AG04449 (cell line): ENCODE measurements at regions of chr11 and their contacts with region 1.

Region 1: GRCh38 chr11:109426442-109427240 is 4.7 kb downstream of the C11orf87 start:
- DNase-seq: peak; percentile 16
- H3K4me3 ChIP-seq: no peak overlapping the region
- CTCF ChIP-seq: peak; percentile 18

Region 2: GRCh38 chr11:109439684-109440083 is 13.0 kb after region 1 on chr11:
- CTCF ChIA-PET with region 1: interaction called, 11 read pairs
- POLR2A ChIA-PET with region 1: interaction called, 3 read pairs
- DNase-seq: no peak
- H3K4me3 ChIP-seq: no peak overlapping the region
- CTCF ChIP-seq: no peak

Region 3: DNA sequence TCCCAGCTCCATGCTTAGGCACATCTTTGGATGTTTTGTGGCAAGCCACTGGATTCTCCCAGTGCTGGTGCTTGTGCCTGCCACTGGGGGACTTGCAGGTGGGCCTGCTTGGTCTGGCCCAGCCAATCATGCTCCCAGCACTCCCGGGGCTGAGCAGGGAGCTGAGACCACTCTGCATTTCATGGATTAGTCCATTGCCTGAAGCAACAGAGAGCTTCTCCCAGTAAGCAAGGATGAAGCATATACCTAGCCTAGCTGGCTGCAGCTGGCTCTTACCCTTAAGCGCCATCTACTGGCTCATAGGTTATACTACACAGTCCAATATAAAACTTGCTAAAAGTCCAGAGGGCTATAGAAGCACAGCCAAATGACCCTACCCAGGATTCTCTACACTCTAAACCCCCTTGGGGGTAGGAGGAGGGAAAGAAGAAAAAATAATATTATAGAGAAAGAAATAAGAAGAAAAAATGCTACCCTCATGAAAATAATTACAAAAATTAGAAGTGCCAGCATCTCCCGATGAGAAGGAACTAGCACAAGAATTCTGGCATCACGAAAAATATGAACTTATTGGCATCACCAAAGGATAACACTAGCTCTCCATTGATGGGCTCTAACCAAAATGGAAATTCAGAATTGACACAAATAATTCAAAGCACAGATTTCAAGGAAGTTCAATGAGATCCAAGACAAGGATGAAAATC is 270.7 kb after region 1 on chr11:
- CTCF ChIA-PET with region 1: interaction called, 12 read pairs
- POLR2A ChIA-PET with region 1: no interaction called
- DNase-seq: no peak
- H3K4me3 ChIP-seq: no peak overlapping the region
- CTCF ChIP-seq: peak; percentile 68